Activated CD4-positive, alpha-beta T cell treated with anti-CD3 and anti-CD28 coated beads for 36 hours (primary cell): ENCODE measurements at regions of chr19 and their contacts with region 1.

Region 1: GRCh38 chr19:8832132-8833021 is at the starts of genes MBD3L1 and ZNF558:
- DNase-seq: peak; percentile 100
- ATAC-seq: peak; percentile 95
- H3K4me3 Mint-ChIP-seq: peak within 1 kb of the TSS; percentile 79
- H3K27ac Mint-ChIP-seq: peak within 1 kb of the TSS; percentile 90
- H3K4me1 Mint-ChIP-seq: peaks cover 19% of the 10 kb centered on the region
- H3K27me3 Mint-ChIP-seq: no peaks in the 10 kb centered on the region
- total RNA-seq, gene MBD3L1: not detected
- total RNA-seq, gene ZNF558: 31.8 to 33.5 TPM

Region 2: GRCh38 chr19:7903244-7904073 is 928.9 kb before region 1 on chr19 and contains the start of gene MAP2K7:
- CTCF ChIA-PET with region 1: no interaction called
- POLR2A ChIA-PET with region 1: no interaction called
- intact Hi-C with region 1: loop called in 1 of 2 experiments (anchors 5 kb)
- DNase-seq: peak; percentile 100
- ATAC-seq: peak; percentile 91
- H3K4me3 Mint-ChIP-seq: peak within 1 kb of the TSS; percentile 85
- H3K27ac Mint-ChIP-seq: peak within 1 kb of the TSS; percentile 92
- H3K4me1 Mint-ChIP-seq: peaks cover 22% of the 10 kb centered on the region
- H3K27me3 Mint-ChIP-seq: no peaks in the 10 kb centered on the region
- total RNA-seq, gene MAP2K7: 32.2 to 33.7 TPM

Region 3: DNA sequence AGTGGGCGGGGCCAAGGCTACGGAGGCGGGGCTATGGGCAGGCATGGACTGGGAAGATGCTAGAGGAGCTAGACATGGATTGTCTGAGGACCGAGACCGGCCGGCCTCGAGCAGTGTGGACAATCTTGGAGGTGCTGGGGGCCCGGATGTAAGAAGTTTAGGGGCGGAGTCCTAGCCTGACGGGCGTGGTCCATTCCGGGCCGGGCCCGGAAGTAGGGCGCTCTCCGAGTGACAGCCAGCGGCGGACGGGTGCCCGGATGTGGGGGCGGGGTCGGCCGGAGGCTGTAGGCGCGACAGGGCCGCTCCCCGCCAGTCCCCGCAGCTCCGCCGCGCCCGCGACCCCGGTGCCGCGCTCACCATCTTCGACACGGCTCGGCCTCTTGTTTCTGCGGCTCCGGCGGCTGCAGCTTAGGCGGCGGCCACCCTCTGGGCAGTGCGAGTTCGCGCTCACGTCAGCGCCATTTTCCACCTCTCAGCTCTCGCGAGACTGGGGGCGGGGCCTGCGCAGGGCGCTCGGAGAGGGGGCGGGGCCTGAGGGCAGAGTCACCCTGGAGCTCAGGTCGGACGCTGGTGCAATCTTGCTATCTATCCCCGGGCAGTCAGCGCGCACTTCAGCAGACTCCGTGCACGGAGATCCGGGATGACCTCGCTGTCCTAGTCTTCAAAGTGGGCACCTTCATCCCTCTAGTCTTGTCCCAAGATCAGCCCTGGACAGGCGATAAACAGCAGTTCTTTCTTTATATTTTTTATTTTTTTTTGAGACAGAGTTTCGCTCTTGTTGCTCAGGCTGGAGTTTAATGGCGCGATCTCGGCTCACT is 318.5 kb before region 1 on chr19 and contains the start of gene ZNF414:
- CTCF ChIA-PET with region 1: no interaction called
- POLR2A ChIA-PET with region 1: no interaction called
- intact Hi-C with region 1: loop called in 1 of 2 experiments (anchors 1 kb)
- DNase-seq: peak; percentile 99
- ATAC-seq: peak; percentile 81
- H3K4me3 Mint-ChIP-seq: peak within 1 kb of the TSS; percentile 81
- H3K27ac Mint-ChIP-seq: peak within 1 kb of the TSS; percentile 97
- H3K4me1 Mint-ChIP-seq: peaks cover 55% of the 10 kb centered on the region
- H3K27me3 Mint-ChIP-seq: no peaks in the 10 kb centered on the region
- total RNA-seq, gene ZNF414: 21.0 to 23.7 TPM

Region 4: GRCh38 chr19:9140159-9140874 is 307.9 kb after region 1 on chr19 and contains the start of gene ZNF317:
- CTCF ChIA-PET with region 1: no interaction called
- POLR2A ChIA-PET with region 1: no interaction called
- intact Hi-C with region 1: loop called in 1 of 2 experiments (anchors 1 kb)
- DNase-seq: peak; percentile 94
- ATAC-seq: peak; percentile 93
- H3K4me3 Mint-ChIP-seq: peak within 1 kb of the TSS; percentile 99
- H3K27ac Mint-ChIP-seq: peak within 1 kb of the TSS; percentile 96
- H3K4me1 Mint-ChIP-seq: peaks cover 38% of the 10 kb centered on the region
- H3K27me3 Mint-ChIP-seq: peaks cover 1% of the 10 kb centered on the region
- total RNA-seq, gene ZNF317: 39.0 to 39.8 TPM

Region 5: GRCh38 chr19:9435279-9436268 is 603.2 kb after region 1 on chr19 and contains the start of gene ZNF266:
- CTCF ChIA-PET with region 1: no interaction called
- POLR2A ChIA-PET with region 1: no interaction called
- intact Hi-C with region 1: loop called in 1 of 2 experiments (anchors 1 kb)
- DNase-seq: peak; percentile 97
- ATAC-seq: peak; percentile 91
- H3K4me3 Mint-ChIP-seq: peak within 1 kb of the TSS; percentile 95
- H3K27ac Mint-ChIP-seq: peak within 1 kb of the TSS; percentile 99
- H3K4me1 Mint-ChIP-seq: peaks cover 33% of the 10 kb centered on the region
- H3K27me3 Mint-ChIP-seq: no peaks in the 10 kb centered on the region
- total RNA-seq, gene ZNF266: 17.1 to 22.4 TPM

Region 6: GRCh38 chr19:9674663-9675357 is 842.4 kb after region 1 on chr19 and contains the start of gene ZNF562:
- CTCF ChIA-PET with region 1: no interaction called
- POLR2A ChIA-PET with region 1: no interaction called
- intact Hi-C with region 1: loop called in 1 of 2 experiments (anchors 1 kb)
- DNase-seq: peak; percentile 91
- ATAC-seq: peak; percentile 78
- H3K4me3 Mint-ChIP-seq: peak within 1 kb of the TSS; percentile 94
- H3K27ac Mint-ChIP-seq: peak within 1 kb of the TSS; percentile 97
- H3K4me1 Mint-ChIP-seq: peaks cover 30% of the 10 kb centered on the region
- H3K27me3 Mint-ChIP-seq: no peaks in the 10 kb centered on the region
- total RNA-seq, gene ZNF562: 29.9 to 39.7 TPM

Region 7: DNA sequence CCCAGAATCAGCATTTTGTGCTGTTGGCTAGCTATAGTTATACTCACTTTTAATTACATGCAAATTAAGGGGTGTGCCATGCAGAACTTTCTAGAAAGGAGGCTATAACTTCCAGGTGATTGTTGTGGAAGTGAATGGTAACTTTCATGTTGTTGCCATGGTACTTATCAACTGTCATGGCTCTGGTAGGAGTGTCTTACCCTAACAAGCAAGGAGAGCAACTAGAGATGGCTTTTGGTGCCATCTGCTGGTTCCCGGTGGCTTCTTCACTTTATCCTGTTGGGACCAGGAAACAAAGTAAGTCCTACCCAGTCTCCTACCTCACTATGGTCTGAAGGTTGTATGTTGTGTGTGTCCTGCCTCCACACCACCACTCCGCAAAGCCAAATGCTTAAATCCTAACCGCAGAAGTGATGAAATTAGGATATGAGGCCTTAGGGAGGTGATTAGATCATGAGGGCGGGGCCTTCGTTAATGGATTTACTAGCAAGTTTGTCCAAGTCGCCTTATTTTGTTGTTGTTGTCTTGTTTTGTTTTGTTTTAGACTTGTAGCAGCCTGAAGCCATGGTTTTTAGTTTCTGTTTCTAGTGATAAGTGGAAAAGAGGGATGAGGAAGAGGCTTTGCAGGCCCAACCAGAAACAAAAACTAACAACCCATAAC is 963.9 kb after region 1 on chr19:
- CTCF ChIA-PET with region 1: no interaction called
- POLR2A ChIA-PET with region 1: no interaction called
- intact Hi-C with region 1: loop called in 1 of 2 experiments (anchors 1 kb)
- DNase-seq: peak; percentile 91
- ATAC-seq: peak; percentile 45
- H3K4me3 Mint-ChIP-seq: no peak overlapping the region
- H3K27ac Mint-ChIP-seq: peak overlapping the region; percentile 5
- H3K4me1 Mint-ChIP-seq: peaks cover 22% of the 10 kb centered on the region
- H3K27me3 Mint-ChIP-seq: no peaks in the 10 kb centered on the region